HepG2 (cell line): ENCODE measurements at regions of chr10 and their contacts with region 1.

Region 1: GRCh38 chr10:59006511-59007306 is 169.7 kb upstream of the PHYHIPL start:
- DNase-seq: peak; percentile 86
- ATAC-seq: peak; percentile 26; the same call in 2 of the 3 replicates
- H3K4me3 ChIP-seq: peak overlapping the region in 2 of 3 experiments; percentile 17 to 45; a peak in 2 of 6 replicates
- H3K27ac ChIP-seq: peak overlapping the region; percentile 87
- H3K4me1 ChIP-seq: peaks cover 98% of the 10 kb centered on the region
- H3K27me3 ChIP-seq: no peaks in the 10 kb centered on the region
- CTCF ChIP-seq: no peak
- EP300 ChIP-seq: peak in 1 of 2 experiments; percentile 98; a peak in 2 of 4 replicates
- POLR2A ChIP-seq: no peak
- RAD21 ChIP-seq: no peak

Region 2: GRCh38 chr10:58967551-58968388 is 38.9 kb before region 1 on chr10:
- CTCF ChIA-PET with region 1: no interaction called
- POLR2A ChIA-PET with region 1: interaction called, 108 read pairs
- in situ Hi-C with region 1: no loop called
- intact Hi-C with region 1: loop called (anchors 2 kb)
- DNase-seq: peak; percentile 93
- ATAC-seq: peak; percentile 99
- H3K4me3 ChIP-seq: peak overlapping the region; percentile 33 to 72 (median 55)
- H3K27ac ChIP-seq: peak overlapping the region; percentile 77
- H3K4me1 ChIP-seq: peaks cover 84% of the 10 kb centered on the region
- H3K27me3 ChIP-seq: no peaks in the 10 kb centered on the region
- CTCF ChIP-seq: peak; percentile 31; the same call in 1 of the 2 replicates
- EP300 ChIP-seq: peak; percentile 39 to 60; a peak in 3 of 4 replicates
- POLR2A ChIP-seq: peak; percentile 71 to 85
- RAD21 ChIP-seq: peak; percentile 45; the same call in 1 of the 2 replicates

Region 3: DNA sequence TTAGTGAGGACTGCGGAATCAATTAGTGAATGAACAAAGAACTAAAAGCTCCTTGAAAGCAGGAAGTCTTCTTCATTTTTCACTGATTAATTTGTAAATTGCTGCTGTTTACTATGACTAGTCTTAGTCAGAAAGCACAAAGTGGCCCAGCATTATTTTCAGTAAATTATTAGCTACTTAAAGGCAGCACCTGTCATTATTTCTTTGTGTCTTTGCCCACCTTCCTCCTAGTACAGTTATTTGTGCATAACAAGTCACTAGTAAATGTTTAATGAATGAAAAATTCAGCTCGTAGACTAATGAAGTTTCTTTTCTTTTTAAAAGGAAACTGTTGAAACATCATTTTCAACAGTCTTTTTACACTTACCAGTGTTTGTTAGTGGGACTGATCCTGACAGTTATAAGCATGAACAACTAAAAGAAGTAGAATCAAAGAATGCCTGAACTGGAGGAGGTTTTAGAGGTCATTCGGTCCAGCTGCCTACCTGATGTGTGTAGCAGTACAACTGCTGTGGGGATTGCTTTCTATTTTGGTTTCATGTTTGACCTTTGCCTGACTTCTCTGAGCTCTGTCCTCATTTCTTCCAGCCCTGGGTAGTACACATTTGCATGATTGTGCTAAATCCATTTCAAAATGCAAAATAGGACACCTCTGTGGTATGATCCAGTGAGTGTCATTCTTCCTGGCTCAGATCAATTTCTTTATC is 29.8 kb after region 1 on chr10:
- CTCF ChIA-PET with region 1: no interaction called
- POLR2A ChIA-PET with region 1: interaction called, 32 read pairs
- in situ Hi-C with region 1: no loop called
- intact Hi-C with region 1: no loop called
- DNase-seq: peak; percentile 75
- ATAC-seq: peak; percentile 94
- H3K4me3 ChIP-seq: peak overlapping the region in 1 of 3 experiments; percentile 29; a peak in 1 of 6 replicates
- H3K27ac ChIP-seq: peak overlapping the region; percentile 87
- H3K4me1 ChIP-seq: peaks cover 66% of the 10 kb centered on the region
- H3K27me3 ChIP-seq: no peaks in the 10 kb centered on the region
- CTCF ChIP-seq: no peak
- EP300 ChIP-seq: 0 out of 4 replicates have a peak, but pooled peaks of 1 of the 2 experiments have one; percentile 14
- POLR2A ChIP-seq: no peak
- RAD21 ChIP-seq: no peak

Region 4: GRCh38 chr10:59073456-59074053 is 66.8 kb after region 1 on chr10:
- CTCF ChIA-PET with region 1: no interaction called
- POLR2A ChIA-PET with region 1: interaction called, 23 read pairs
- in situ Hi-C with region 1: no loop called
- intact Hi-C with region 1: loop called (anchors 1 kb)
- DNase-seq: peak; percentile 99
- ATAC-seq: peak; percentile 98
- H3K4me3 ChIP-seq: no peak overlapping the region; a peak in 1 of 6 replicates
- H3K27ac ChIP-seq: peak overlapping the region; percentile 90
- H3K4me1 ChIP-seq: peaks cover 83% of the 10 kb centered on the region
- H3K27me3 ChIP-seq: no peaks in the 10 kb centered on the region
- CTCF ChIP-seq: no peak
- EP300 ChIP-seq: peak; percentile 97 to 100
- POLR2A ChIP-seq: peak in 1 of 2 experiments; percentile 39; a peak in 1 of 4 replicates
- RAD21 ChIP-seq: peak; percentile 36; the same call in 1 of the 2 replicates